CD4-positive, alpha-beta memory T cell (primary cell): ENCODE measurements at regions of chr16 and their contacts with region 1.

Region 1: GRCh38 chr16:81723098-81723723 is 55.9 kb upstream of the PLCG2 start:
- DNase-seq: peak; percentile 61 to 76 (median 73)
- H3K4me3 ChIP-seq: no peak overlapping the region
- H3K4me3 Mint-ChIP-seq: peak overlapping the region in 1 of 8 donors; percentile 52
- H3K27ac ChIP-seq: no peak overlapping the region
- H3K27ac Mint-ChIP-seq: peak overlapping the region in 4 of 7 donors; percentile 14 to 84 (median 70)
- H3K4me1 ChIP-seq: peaks cover 11% of the 10 kb centered on the region
- H3K4me1 Mint-ChIP-seq: peaks cover 11 to 29% (median 13%) of the 10 kb centered on the region in 4 donors
- H3K27me3 ChIP-seq: no peaks in the 10 kb centered on the region
- H3K27me3 Mint-ChIP-seq: no peaks in the 10 kb centered on the region

Region 2: GRCh38 chr16:81521151-81521626 is 202.0 kb before region 1 on chr16:
- CTCF ChIA-PET with region 1: interaction called, 5 read pairs
- POLR2A ChIA-PET with region 1: interaction called, 3 read pairs
- intact Hi-C with region 1: loop called (anchors 5 kb)
- DNase-seq: peak; percentile 84 to 90 (median 87)
- H3K4me3 ChIP-seq: no peak overlapping the region
- H3K4me3 Mint-ChIP-seq: peak overlapping the region; percentile 15 to 72 (median 58)
- H3K27ac ChIP-seq: peak overlapping the region; percentile 63
- H3K27ac Mint-ChIP-seq: peak overlapping the region; percentile 93 to 98 (median 97)
- H3K4me1 ChIP-seq: peaks cover 51% of the 10 kb centered on the region
- H3K4me1 Mint-ChIP-seq: peaks cover 28 to 64% (median 50%) of the 10 kb centered on the region in 4 donors
- H3K27me3 ChIP-seq: no peaks in the 10 kb centered on the region
- H3K27me3 Mint-ChIP-seq: no peaks in the 10 kb centered on the region

Region 3: DNA sequence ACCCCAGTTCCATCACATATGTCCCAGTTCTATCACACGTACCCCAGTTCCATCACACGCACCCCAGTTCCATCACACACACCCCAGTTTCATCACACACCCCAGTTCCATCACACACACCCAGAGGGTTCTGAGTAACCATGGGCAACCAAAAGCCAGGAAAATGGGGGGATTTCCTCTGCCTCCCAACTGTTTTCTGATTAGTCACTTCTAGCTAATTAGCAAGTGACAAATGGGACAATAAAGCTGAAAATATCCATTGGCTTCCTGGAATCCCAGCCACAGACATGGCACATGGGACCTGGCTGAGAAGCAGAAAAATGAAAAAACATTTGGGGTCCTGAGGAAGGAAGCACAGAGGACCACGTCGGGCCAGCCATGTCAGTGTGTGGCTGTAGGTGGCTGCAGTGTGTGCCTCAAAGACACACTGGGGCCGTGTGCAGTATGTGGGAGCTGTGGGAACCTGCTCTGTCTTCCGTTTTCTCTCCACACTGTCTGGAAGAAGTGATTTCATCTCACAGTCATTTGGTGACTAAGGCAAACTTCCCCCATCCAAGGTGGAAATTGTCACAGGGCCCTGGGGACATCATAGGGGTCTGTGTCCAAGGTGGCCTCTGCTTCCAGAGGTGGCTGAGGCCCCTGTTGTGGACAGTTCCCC is 171.9 kb before region 1 on chr16:
- CTCF ChIA-PET with region 1: no interaction called
- POLR2A ChIA-PET with region 1: no interaction called
- intact Hi-C with region 1: no loop called
- DNase-seq: no peak
- H3K4me3 ChIP-seq: no peak overlapping the region
- H3K4me3 Mint-ChIP-seq: peak overlapping the region in 1 of 8 donors; percentile 36
- H3K27ac ChIP-seq: no peak overlapping the region
- H3K27ac Mint-ChIP-seq: peak overlapping the region in 5 of 7 donors; percentile 3 to 88 (median 49)
- H3K4me1 ChIP-seq: peaks cover 27% of the 10 kb centered on the region
- H3K4me1 Mint-ChIP-seq: peaks cover 22 to 62% (median 43%) of the 10 kb centered on the region in 4 donors
- H3K27me3 ChIP-seq: no peaks in the 10 kb centered on the region
- H3K27me3 Mint-ChIP-seq: no peaks in the 10 kb centered on the region

Region 4: GRCh38 chr16:81632392-81633146 is 90.6 kb before region 1 on chr16:
- CTCF ChIA-PET with region 1: interaction called, 5 read pairs
- POLR2A ChIA-PET with region 1: interaction called, 19 read pairs
- intact Hi-C with region 1: loop called (anchors 2 kb)
- DNase-seq: peak; percentile 75 to 93 (median 80)
- H3K4me3 ChIP-seq: peak overlapping the region in 1 of 2 donors; percentile 21
- H3K4me3 Mint-ChIP-seq: peak overlapping the region; percentile 38 to 83 (median 67)
- H3K27ac ChIP-seq: peak overlapping the region; percentile 60
- H3K27ac Mint-ChIP-seq: peak overlapping the region; percentile 93 to 97 (median 95)
- H3K4me1 ChIP-seq: peaks cover 36% of the 10 kb centered on the region
- H3K4me1 Mint-ChIP-seq: peaks cover 18 to 43% (median 36%) of the 10 kb centered on the region in 4 donors
- H3K27me3 ChIP-seq: no peaks in the 10 kb centered on the region
- H3K27me3 Mint-ChIP-seq: no peaks in the 10 kb centered on the region

Region 5: GRCh38 chr16:81696961-81697615 is 26.1 kb before region 1 on chr16:
- CTCF ChIA-PET with region 1: interaction called, 9 read pairs
- POLR2A ChIA-PET with region 1: no interaction called
- intact Hi-C with region 1: loop called (anchors 2 kb)
- DNase-seq: peak in 3 of 5 donors; percentile 19 to 39 (median 28)
- H3K4me3 ChIP-seq: no peak overlapping the region
- H3K4me3 Mint-ChIP-seq: no peak overlapping the region
- H3K27ac ChIP-seq: no peak overlapping the region
- H3K27ac Mint-ChIP-seq: peak overlapping the region in 3 of 7 donors; percentile 17 to 76 (median 57)
- H3K4me1 ChIP-seq: no peaks in the 10 kb centered on the region
- H3K4me1 Mint-ChIP-seq: peaks cover 0 to 5% (median under 1%) of the 10 kb centered on the region in 4 donors
- H3K27me3 ChIP-seq: no peaks in the 10 kb centered on the region
- H3K27me3 Mint-ChIP-seq: no peaks in the 10 kb centered on the region

Region 6: DNA sequence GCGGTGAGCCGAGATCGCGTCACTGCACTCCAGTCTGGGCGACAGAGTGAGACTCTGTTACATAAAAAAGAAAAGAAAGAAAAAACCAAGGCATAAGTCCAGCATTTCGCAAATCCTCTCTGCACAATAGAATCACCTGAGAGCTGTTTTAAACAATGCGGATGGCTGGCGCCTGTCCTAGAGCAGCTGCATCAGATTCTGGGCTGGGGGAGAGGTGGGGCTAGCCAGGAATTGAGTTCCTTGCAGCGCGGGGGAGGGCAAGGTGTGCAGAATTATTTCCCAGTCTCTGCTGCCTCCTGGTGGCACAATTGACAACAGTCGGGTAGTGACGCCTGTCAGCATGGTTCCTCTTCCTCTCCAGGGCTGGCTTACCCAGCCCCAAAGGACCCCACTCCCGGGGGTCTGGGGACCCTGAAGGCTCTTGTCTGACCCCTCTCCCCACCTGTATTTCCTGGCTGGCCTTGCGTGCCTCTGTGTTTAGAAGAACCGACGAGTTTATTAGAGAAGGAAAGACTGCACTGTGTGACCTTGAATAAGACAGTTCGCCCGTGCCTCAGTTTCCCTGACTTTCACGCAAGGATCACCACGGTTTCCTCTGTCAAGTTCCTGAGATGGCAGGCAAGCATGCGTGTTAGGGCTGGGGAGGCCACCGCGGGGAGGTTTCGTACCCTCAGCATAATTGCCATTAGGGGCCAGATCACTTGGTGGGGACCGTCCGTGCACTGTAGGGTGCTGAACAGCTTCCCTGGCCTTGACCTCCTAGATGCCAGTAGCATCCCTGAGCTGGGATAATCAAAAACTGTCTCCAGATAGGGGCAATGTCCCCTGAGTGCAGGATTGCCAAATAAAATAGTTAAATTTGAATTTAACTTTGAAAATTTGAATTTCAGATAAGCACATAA is 14.9 kb after region 1 on chr16:
- CTCF ChIA-PET with region 1: interaction called, 41 read pairs
- POLR2A ChIA-PET with region 1: no interaction called
- intact Hi-C with region 1: loop called (anchors 2 kb)
- DNase-seq: peak; percentile 80 to 84 (median 81)
- H3K4me3 ChIP-seq: peak overlapping the region in 1 of 2 donors; percentile 3
- H3K4me3 Mint-ChIP-seq: peak overlapping the region; percentile 67 to 82 (median 75)
- H3K27ac ChIP-seq: no peak overlapping the region
- H3K27ac Mint-ChIP-seq: peak overlapping the region in 5 of 7 donors; percentile 22 to 78 (median 30)
- H3K4me1 ChIP-seq: peaks cover 4% of the 10 kb centered on the region
- H3K4me1 Mint-ChIP-seq: peaks cover 0 to 12% (median 7%) of the 10 kb centered on the region in 4 donors
- H3K27me3 ChIP-seq: no peaks in the 10 kb centered on the region
- H3K27me3 Mint-ChIP-seq: no peaks in the 10 kb centered on the region

Region 7: DNA sequence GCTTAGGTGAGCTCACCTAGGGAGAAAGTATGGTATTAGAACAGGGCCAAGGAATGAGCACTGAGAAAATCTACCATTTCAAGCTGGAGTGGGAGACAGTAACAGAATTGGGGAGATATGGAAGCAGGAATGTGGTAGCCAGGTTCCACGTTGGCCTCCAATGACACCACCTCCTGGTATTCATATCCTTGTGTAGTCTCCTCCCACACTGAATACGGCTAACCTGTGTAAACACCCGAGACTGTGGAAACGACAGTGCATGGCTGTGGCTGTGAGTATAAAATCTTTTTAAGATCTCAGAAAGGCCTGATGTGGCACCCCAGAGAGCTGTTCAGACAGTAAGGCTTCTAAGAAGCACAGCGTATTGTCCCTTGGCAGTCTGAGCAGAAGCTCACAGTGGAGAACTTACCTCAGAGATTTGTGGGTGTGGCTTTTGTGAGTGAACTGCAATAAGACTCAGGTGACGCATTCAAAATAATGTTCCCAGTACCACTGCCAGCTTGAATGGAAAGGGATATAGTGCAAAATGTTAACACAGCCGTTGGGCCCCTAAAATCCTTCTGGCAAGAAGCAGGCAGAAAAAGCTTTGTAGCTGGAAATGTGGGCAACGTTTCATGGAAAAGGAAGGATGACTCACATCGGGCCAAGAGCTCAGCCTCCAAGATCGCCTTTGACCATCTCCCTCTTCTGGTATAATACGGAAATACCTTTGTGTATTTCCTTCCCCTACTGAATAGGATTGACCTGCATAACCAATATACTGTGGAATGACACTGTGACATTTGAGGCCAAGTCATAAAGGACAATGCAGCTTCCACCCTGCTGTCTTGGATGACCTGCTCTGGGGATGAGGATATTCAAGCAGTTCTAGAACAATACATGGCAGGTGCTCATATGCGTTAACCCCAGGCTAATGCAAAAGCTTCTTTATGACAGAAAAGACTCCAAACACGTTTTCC is 273.7 kb after region 1 on chr16:
- CTCF ChIA-PET with region 1: no interaction called
- POLR2A ChIA-PET with region 1: no interaction called
- intact Hi-C with region 1: no loop called
- DNase-seq: no peak
- H3K4me3 ChIP-seq: no peak overlapping the region
- H3K4me3 Mint-ChIP-seq: no peak overlapping the region
- H3K27ac ChIP-seq: no peak overlapping the region
- H3K27ac Mint-ChIP-seq: no peak overlapping the region
- H3K4me1 ChIP-seq: no peaks in the 10 kb centered on the region
- H3K4me1 Mint-ChIP-seq: peaks cover 0 to 3% (median under 1%) of the 10 kb centered on the region in 4 donors
- H3K27me3 ChIP-seq: no peaks in the 10 kb centered on the region
- H3K27me3 Mint-ChIP-seq: no peaks in the 10 kb centered on the region